GM23248 (cell line): ENCODE measurements at regions of chr1 and their contacts with region 1.

Region 1: GRCh38 chr1:45490626-45491486 is at the start of gene TESK2:
- DNase-seq: peak; percentile 98
- H3K4me3 ChIP-seq: peak within 1 kb of the TSS; percentile 89
- H3K27ac ChIP-seq: peak within 1 kb of the TSS; percentile 14; the same call in 1 of the 2 replicates
- H3K4me1 ChIP-seq: peaks cover 4% of the 10 kb centered on the region; the same call in 1 of the 2 replicates
- H3K27me3 ChIP-seq: no peaks in the 10 kb centered on the region
- total RNA-seq, gene TESK2: 1.1 and 1.3 TPM in 2 replicates

Region 2: GRCh38 chr1:44994309-44994898 is 496.5 kb before region 1 on chr1:
- in situ Hi-C with region 1: no loop called
- DNase-seq: no peak
- H3K4me3 ChIP-seq: no peak overlapping the region
- H3K27ac ChIP-seq: no peak overlapping the region
- H3K4me1 ChIP-seq: no peaks in the 10 kb centered on the region
- H3K27me3 ChIP-seq: no peaks in the 10 kb centered on the region

Region 3: DNA sequence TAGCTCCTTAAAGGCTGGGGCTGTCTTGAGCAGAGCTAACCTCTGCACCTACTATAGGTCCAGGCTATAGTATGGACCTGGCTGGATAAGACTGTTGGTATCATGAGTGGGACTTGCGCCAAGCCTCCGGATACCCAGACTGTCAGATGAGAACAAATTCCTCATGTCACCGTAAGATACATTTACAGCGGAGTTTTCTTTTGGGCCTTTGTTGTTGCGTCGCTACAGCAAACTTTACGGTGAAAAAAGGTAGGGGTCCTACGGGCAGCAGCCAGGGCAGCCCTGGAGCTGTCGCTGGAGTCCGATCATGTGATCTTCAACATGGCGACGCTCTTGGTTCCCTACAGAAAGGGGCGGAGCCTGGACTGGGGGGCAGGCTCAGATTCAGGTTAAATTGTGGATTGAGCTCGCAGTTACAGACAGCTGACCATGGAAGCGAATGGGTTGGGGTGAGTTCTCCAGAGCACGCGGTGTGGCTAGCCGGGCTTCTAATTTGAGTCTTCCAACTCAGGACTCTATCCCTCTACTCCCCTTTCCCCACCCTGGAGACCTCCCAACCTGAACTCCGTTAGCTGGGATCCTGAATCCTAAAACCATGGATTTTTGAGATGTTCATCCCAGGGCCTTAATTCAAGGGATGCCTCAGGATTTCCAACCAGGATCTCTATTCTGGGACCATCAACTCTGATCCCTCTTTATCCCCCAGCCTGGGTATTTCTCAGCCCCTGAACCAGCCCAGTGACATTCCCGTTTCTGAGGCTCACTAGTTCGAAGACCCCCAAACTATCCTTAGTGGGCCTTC is 478.8 kb before region 1 on chr1 and contains the start of gene UROD:
- in situ Hi-C with region 1: loop called (anchors 10 kb)
- DNase-seq: peak; percentile 99
- H3K4me3 ChIP-seq: peak within 1 kb of the TSS; percentile 82
- H3K27ac ChIP-seq: peak within 1 kb of the TSS; percentile 73
- H3K4me1 ChIP-seq: peaks cover 16% of the 10 kb centered on the region
- H3K27me3 ChIP-seq: no peaks in the 10 kb centered on the region
- total RNA-seq, gene UROD: 103 and 111 TPM in 2 replicates

Region 4: GRCh38 chr1:45348716-45349677 is 141.9 kb before region 1 on chr1:
- in situ Hi-C with region 1: loop called (anchors 5 kb)
- DNase-seq: peak; percentile 20
- H3K4me3 ChIP-seq: no peak overlapping the region
- H3K27ac ChIP-seq: no peak overlapping the region
- H3K4me1 ChIP-seq: peaks cover 18% of the 10 kb centered on the region
- H3K27me3 ChIP-seq: no peaks in the 10 kb centered on the region

Region 5: GRCh38 chr1:45617618-45618017 is 126.8 kb after region 1 on chr1:
- in situ Hi-C with region 1: no loop called
- DNase-seq: peak; percentile 41
- H3K4me3 ChIP-seq: no peak overlapping the region
- H3K27ac ChIP-seq: no peak overlapping the region
- H3K4me1 ChIP-seq: no peaks in the 10 kb centered on the region
- H3K27me3 ChIP-seq: no peaks in the 10 kb centered on the region

Region 6: GRCh38 chr1:45954401-45954847 is 463.6 kb after region 1 on chr1:
- in situ Hi-C with region 1: no loop called
- DNase-seq: peak; percentile 90
- H3K4me3 ChIP-seq: peak overlapping the region; percentile 29
- H3K27ac ChIP-seq: peak overlapping the region; percentile 62
- H3K4me1 ChIP-seq: peaks cover 20% of the 10 kb centered on the region
- H3K27me3 ChIP-seq: no peaks in the 10 kb centered on the region

Region 7: DNA sequence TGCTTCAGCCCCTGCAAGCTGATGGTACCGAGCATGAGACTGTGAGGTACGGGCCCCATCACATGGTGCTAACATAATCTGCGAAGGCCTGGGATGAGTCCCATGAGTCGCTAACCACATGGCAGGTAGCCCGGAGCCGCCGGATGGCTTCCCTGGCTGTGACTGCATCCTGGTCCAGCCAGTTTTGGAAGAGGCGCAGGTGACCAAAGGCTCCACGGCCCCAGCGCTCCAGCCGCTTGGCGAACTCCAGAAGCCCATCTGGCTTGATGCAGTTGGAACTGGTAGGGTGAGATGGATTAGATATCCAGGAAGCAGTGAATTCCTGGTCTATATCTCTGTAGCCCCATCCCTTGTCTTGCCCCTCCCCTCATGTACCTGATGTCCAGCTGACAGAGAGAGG is 788.0 kb after region 1 on chr1:
- in situ Hi-C with region 1: no loop called
- DNase-seq: no peak
- H3K4me3 ChIP-seq: no peak overlapping the region
- H3K27ac ChIP-seq: no peak overlapping the region
- H3K4me1 ChIP-seq: no peaks in the 10 kb centered on the region
- H3K27me3 ChIP-seq: no peaks in the 10 kb centered on the region